ENCODE measurements at regions of chr4 and their contacts with region 1.

Region 1: DNA sequence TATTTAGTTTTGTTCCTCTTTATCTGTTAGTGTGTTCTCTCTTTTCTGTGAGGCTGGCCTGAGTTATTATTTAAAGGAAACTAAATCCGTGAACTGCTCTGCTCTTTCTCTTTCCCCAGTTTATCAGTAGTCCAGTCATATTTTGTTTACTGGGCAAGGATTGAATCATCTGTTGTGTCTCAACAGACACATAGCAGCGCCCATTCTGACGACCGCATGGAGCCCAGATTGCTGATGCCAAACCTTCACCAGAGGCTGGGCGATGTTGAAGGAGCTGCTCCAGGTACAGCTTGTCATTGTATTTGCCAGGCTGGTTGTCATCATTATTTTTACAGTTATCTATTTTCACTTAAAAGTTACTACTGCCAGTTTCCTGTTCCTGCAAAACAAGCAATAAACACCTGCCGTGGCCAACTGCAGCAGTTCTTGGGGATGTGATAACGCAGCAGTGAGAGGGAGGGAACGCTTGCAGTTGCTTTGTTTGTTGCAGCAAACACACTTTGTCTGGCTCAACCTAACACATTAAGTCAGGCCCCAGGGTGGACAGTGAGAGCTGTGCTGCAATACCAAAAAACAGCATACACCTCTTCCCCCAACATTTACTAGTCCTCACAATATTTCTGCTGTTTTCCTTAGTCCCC is 10.1 kb downstream of the REELD1 start:
- DNase-seq: no peak
- H3K4me3 ChIP-seq: no peak overlapping the region
- H3K27ac ChIP-seq: no peak overlapping the region
- H3K4me1 ChIP-seq: no peaks in the 10 kb centered on the region
- H3K27me3 ChIP-seq: peaks cover 3 to 9% of the 10 kb centered on the region in 2 experiments
- CTCF ChIP-seq: no peak
- POLR2A ChIP-seq: no peak

Region 2: DNA sequence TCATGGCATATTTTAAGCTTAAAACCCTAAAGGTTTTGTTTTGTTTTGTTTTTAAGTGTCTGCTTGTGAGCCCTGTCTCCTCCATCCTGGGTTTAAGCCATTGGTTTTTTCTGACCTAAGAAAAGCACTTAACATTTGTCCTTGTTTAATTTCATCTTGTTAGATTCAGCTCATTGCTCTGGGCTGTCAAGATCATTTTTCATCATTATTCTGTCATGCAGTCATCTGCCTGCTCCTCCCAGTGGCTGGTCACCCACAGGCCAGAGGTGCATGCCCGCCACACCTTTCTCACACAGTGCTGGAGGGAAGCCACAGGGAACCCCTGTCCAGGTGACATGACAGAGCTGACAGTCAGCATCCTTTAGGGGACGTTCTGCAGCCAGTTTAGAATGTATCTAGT is 21.8 kb before region 1 on chr4:
- CTCF ChIA-PET with region 1: no interaction called
- POLR2A ChIA-PET with region 1: no interaction called
- dilution Hi-C with region 1: no loop called
- intact Hi-C with region 1: loop called (anchors 1 kb)
- DNase-seq: no peak
- H3K4me3 ChIP-seq: no peak overlapping the region
- H3K27ac ChIP-seq: no peak overlapping the region
- H3K4me1 ChIP-seq: no peaks in the 10 kb centered on the region
- H3K27me3 ChIP-seq: peaks cover 0 to 3% of the 10 kb centered on the region in 2 experiments
- CTCF ChIP-seq: no peak
- POLR2A ChIP-seq: no peak

Region 3: DNA sequence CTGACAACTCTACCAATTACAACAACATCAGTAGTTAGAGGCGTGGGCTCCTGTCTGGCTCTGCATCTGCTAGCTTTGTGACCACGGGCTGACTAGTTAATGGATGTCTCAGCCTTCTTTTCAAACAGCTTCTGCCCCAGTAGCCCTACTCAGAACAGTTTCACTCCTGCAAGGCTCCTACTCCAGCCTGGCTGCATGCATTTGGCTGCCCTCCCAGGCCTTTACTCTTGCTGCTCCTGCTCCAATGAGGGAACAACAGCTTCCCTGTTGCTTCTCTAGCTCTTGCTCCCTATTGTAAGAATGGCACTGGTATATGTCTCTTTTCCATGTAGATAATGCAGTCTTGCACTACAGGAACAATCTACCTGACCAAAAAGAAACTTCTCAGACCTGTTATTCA is 627.9 kb after region 1 on chr4:
- CTCF ChIA-PET with region 1: no interaction called
- POLR2A ChIA-PET with region 1: no interaction called
- dilution Hi-C with region 1: no loop called
- intact Hi-C with region 1: no loop called
- DNase-seq: no peak
- H3K4me3 ChIP-seq: no peak overlapping the region
- H3K27ac ChIP-seq: no peak overlapping the region
- H3K4me1 ChIP-seq: no peaks in the 10 kb centered on the region
- H3K27me3 ChIP-seq: peaks cover 3 to 6% of the 10 kb centered on the region in 2 experiments
- CTCF ChIP-seq: no peak
- POLR2A ChIP-seq: no peak